ENCODE measurements at regions of chr17 and their contacts with region 1.

Region 1: DNA sequence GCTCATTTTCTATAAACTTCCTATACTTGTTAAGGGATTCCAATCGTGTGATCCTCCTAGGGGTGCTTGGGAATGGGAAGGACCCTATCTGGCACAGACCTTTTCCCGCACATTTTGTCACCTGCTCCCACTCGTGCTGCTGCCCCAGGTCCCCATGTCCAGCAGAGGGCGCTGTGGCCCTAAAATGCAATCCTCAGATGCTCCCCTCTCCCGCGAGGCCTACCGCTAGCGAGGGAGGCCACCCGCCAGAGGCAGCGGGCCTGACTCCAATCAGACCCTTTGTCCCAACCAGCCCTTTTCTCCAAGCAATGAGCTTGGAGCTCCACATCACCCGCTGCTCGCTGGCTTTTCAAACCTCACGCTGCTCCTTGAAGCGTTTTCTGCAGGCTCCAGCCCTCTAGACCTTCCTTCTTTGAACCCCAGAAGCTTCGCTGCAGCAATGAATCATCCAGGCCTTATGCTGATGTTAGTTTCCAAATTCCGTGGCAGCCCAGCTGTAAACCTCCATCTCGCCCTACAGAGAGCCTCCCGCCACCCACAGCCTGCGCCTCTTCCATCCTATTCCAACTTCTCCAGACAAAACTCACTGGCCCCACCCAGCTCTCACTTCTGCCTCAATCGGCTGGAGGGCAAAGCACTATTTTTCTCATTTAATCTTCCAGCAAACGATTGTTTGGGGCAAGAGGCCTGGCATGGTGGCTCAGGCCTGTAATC is 23.6 kb upstream of the FZD2 start:
- DNase-seq: peak; percentile 97
- ATAC-seq: peak; percentile 88
- H3K4me3 Mint-ChIP-seq: no peak overlapping the region
- H3K27ac Mint-ChIP-seq: peak overlapping the region; percentile 25; the same call in 1 of the 2 replicates
- H3K4me1 Mint-ChIP-seq: peaks cover 31% of the 10 kb centered on the region
- H3K27me3 Mint-ChIP-seq: peaks cover 41% of the 10 kb centered on the region
- CTCF ChIP-seq: peak; percentile 96

Region 2: GRCh38 chr17:44522883-44523671 is 10.6 kb before region 1 on chr17:
- CTCF ChIA-PET with region 1: interaction called, 32 read pairs
- POLR2A ChIA-PET with region 1: no interaction called
- DNase-seq: peak; percentile 91
- ATAC-seq: peak; percentile 99
- H3K4me3 Mint-ChIP-seq: no peak overlapping the region
- H3K27ac Mint-ChIP-seq: no peak overlapping the region
- H3K4me1 Mint-ChIP-seq: no peaks in the 10 kb centered on the region
- H3K27me3 Mint-ChIP-seq: peaks cover 14% of the 10 kb centered on the region
- CTCF ChIP-seq: 0 out of 2 replicates have a peak, but pooled peaks have one; percentile 51

Region 3: DNA sequence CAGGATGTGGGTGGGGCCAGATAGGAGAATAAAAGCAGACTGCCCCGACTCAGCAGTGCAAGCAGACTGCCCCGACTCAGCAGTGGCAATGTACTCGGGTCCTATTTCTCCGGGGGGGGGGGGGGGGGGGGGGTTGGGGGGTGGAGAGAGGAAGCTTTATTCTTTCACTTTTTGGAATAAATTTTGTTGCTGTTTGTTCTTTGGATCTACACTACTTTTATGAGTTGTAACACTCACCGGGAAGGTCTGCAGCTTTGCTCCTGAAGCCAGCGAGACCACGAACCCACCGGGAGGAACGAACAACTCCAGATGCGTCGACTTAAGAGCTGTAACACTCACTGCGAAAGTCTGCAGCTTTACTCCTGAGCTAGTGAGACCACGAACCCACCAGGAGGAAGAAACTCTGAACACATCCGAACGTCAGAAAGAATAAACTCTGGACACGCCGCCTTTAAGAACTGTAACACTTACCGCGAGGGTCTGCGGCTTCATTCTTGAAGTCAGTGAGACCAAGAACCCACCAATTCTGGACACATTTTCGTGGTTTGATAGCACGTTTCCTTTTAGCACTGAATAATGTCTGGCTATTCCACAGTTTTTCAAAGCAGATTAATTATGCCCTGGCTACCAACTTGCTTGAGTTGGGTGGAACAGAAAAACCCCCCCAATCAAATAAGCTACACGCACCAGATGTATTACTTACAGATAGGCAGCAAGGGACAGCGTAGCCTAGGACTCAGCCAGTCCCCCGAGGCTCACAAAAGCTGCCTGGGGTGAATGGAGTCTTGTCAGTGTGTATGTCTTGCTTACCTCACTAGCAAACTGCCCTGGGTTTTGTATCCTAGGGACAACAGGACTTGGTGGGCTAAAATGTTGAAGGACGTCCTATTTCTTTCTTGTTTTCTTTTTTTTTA is 35.5 kb after region 1 on chr17:
- CTCF ChIA-PET with region 1: interaction called, 14 read pairs
- POLR2A ChIA-PET with region 1: no interaction called
- DNase-seq: peak; percentile 25
- ATAC-seq: 0 out of 2 replicates have a peak, but pooled peaks have one; percentile 22
- H3K4me3 Mint-ChIP-seq: no peak overlapping the region
- H3K27ac Mint-ChIP-seq: peak overlapping the region; percentile 63
- H3K4me1 Mint-ChIP-seq: no peaks in the 10 kb centered on the region
- H3K27me3 Mint-ChIP-seq: peaks cover 10% of the 10 kb centered on the region
- CTCF ChIP-seq: no peak

Region 4: GRCh38 chr17:44607836-44608690 is 74.4 kb after region 1 on chr17:
- CTCF ChIA-PET with region 1: interaction called, 15 read pairs
- POLR2A ChIA-PET with region 1: interaction called, 3 read pairs
- DNase-seq: peak; percentile 71
- ATAC-seq: peak; percentile 87
- H3K4me3 Mint-ChIP-seq: no peak overlapping the region
- H3K27ac Mint-ChIP-seq: no peak overlapping the region
- H3K4me1 Mint-ChIP-seq: peaks cover 35% of the 10 kb centered on the region
- H3K27me3 Mint-ChIP-seq: no peaks in the 10 kb centered on the region; the same call in 1 of the 2 replicates
- CTCF ChIP-seq: no peak

Region 5: DNA sequence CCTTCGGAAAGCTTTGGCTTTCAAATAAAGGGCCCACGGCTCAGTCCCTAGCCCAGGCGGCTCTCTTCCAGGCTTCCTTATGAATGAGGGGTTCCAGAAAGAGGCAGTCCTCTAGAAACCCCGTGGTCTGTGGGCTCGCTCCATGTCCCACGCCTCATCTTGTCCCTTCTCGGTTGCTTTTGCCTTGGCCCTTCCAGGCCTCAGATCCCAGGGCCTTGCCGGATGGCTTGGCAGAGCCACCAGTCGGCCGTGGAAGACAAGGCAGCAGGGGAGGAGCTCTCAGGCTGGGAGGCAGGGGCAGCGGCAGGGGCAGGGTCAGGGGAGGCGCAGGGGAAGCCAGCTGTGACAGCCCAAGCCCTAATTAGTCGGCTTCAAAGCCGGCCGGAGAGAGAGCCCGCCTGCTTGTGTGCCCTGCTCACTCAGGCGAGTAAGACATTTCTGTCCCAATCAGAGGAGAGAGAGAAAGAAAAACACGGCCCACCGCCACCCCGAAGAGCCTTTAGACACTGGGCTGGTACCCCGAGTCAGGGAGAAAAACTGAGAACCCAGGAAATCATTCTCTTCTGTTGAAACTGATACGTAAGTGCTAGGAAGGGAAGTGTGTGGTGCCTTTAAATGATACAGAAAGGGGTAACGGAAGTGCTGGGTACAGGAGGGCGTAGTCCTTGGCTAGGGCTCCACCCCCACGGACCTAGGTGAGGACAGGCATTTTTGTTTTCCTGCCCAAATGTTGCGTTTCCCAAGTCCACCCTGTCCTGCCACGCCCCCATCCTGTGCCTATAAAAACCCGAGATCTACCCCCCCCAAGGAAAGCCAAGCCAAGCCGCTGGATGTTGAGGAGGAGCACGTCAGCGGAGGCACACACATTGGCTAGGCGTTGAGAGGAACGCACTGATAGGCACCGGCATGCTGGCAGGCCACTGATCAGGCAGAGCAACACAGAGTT is 94.8 kb after region 1 on chr17:
- CTCF ChIA-PET with region 1: interaction called, 20 read pairs
- POLR2A ChIA-PET with region 1: interaction called, 3 read pairs
- DNase-seq: peak; percentile 80
- ATAC-seq: peak; percentile 96
- H3K4me3 Mint-ChIP-seq: peak overlapping the region; percentile 67
- H3K27ac Mint-ChIP-seq: peak overlapping the region; percentile 96
- H3K4me1 Mint-ChIP-seq: peaks cover 24% of the 10 kb centered on the region
- H3K27me3 Mint-ChIP-seq: peaks cover 4% of the 10 kb centered on the region; the same call in 1 of the 2 replicates
- CTCF ChIP-seq: no peak

Region 6: GRCh38 chr17:44655983-44656710 is 122.5 kb after region 1 on chr17 and contains the start of gene MEIOC:
- CTCF ChIA-PET with region 1: interaction called, 13 read pairs
- POLR2A ChIA-PET with region 1: no interaction called
- DNase-seq: peak; percentile 89
- ATAC-seq: peak; percentile 89
- H3K4me3 Mint-ChIP-seq: peak within 1 kb of the TSS; percentile 69
- H3K27ac Mint-ChIP-seq: no peak within 1 kb of the TSS
- H3K4me1 Mint-ChIP-seq: peaks cover 3% of the 10 kb centered on the region
- H3K27me3 Mint-ChIP-seq: peaks cover 67% of the 10 kb centered on the region
- CTCF ChIP-seq: no peak
- total RNA-seq, gene MEIOC: 4.4 to 8.3 TPM (median 5.0 TPM) in 3 replicates

Measured in WTC11 (cell line).